Cardiac septum (tissue), 1 donor: ENCODE measurements at regions of chr13 and their contacts with region 1.

Region 1: DNA sequence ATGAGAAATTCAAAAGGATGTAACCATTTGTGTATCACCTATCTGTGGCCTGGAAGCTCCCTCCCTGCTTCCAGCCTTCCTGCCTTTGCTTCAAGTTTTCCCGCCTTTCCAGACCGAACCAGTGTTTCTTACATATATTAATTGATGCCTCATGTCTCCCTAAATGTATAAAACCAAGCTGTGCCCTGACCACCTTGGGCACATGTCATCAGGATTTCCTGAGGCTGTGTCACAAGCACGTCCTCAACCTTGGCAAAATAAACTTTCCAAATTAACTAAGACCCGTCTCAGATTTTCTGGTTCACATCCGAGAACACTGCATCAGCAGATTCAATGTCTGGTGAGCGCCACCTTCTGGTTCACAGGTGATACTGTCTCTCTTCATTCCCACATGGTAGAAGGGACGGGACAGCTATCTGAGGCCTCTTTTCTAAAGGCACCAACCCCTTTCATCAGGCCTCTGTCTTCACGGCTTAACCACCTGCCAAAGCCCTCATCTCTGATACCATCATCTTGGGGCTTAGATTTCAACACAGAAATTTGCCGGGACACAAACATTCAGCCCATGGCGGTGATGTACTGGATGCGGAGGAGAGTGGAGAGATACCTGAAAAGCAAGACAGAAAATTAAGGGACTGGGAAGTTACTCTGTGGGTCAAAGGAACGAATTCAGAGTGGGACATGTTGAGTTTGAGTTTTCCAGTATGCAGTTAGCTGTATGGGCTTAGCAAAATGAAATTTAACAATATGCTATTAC is 58.7 kb upstream of the PABPC3 start:
- DNase-seq: no peak

Region 2: GRCh38 chr13:25001476-25002206 is 35.6 kb before region 1 on chr13:
- intact Hi-C with region 1: loop called (anchors 5 kb)
- DNase-seq: no peak